ENCODE measurements at regions of chr19 and their contacts with region 1.

Region 1: GRCh38 chr19:17305517-17306284 is at the start of gene MRPL34:
- DNase-seq: peak; percentile 97
- ATAC-seq: peak; percentile 70
- H3K4me3 Mint-ChIP-seq: peak within 1 kb of the TSS; percentile 86
- H3K27ac Mint-ChIP-seq: peak within 1 kb of the TSS; percentile 92
- H3K4me1 Mint-ChIP-seq: peaks cover 46% of the 10 kb centered on the region
- H3K27me3 Mint-ChIP-seq: no peaks in the 10 kb centered on the region
- total RNA-seq, gene MRPL34: 72.0 to 88.6 TPM

Region 2: DNA sequence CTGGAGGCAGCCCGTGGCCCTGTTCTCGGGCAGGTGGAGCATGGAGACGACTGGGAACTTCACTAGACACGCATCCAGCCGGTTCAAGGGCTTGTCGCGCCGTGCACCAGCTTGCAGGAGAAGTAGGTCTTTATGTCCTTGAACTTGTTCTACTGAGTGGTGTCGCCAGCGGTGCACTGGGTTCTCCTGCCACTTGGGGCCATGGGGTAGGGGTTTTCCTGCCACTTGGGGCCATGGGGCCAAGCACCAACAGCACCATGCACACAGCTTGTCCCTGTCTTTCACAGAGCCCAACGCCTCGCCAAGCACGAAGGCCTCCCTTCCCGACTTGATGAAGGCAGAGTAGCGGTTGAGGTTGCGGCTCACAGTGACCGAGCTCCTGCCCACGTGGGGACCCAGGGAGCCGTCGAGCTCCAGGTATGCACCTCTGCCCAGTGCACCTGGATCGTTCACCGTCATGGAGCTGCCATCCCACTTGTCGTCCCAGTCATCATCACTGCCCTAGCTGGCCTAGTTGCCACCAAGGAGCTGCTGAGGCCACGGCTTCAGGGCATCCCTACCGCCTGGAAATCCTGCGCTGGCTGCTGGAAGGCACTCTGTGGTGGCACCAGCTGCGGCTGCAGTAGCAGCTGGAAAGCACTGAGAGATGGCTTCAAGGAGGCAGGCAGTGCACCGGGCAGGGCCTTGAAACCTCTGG is 1270.0 kb before region 1 on chr19:
- CTCF ChIA-PET with region 1: no interaction called
- POLR2A ChIA-PET with region 1: no interaction called
- intact Hi-C with region 1: no loop called
- DNase-seq: no peak
- ATAC-seq: no peak
- H3K4me3 Mint-ChIP-seq: no peak overlapping the region
- H3K27ac Mint-ChIP-seq: peak overlapping the region; percentile 25
- H3K4me1 Mint-ChIP-seq: no peaks in the 10 kb centered on the region
- H3K27me3 Mint-ChIP-seq: no peaks in the 10 kb centered on the region

Region 3: GRCh38 chr19:16542045-16542909 is 763.4 kb before region 1 on chr19 and contains the start of gene CHERP:
- CTCF ChIA-PET with region 1: no interaction called
- POLR2A ChIA-PET with region 1: no interaction called
- intact Hi-C with region 1: loop called in 1 of 2 experiments (anchors 5 kb)
- DNase-seq: peak; percentile 97
- ATAC-seq: peak; percentile 85
- H3K4me3 Mint-ChIP-seq: peak within 1 kb of the TSS; percentile 98
- H3K27ac Mint-ChIP-seq: peak within 1 kb of the TSS; percentile 94
- H3K4me1 Mint-ChIP-seq: peaks cover 63% of the 10 kb centered on the region
- H3K27me3 Mint-ChIP-seq: no peaks in the 10 kb centered on the region
- total RNA-seq, gene CHERP: 57.9 to 64.8 TPM

Region 4: DNA sequence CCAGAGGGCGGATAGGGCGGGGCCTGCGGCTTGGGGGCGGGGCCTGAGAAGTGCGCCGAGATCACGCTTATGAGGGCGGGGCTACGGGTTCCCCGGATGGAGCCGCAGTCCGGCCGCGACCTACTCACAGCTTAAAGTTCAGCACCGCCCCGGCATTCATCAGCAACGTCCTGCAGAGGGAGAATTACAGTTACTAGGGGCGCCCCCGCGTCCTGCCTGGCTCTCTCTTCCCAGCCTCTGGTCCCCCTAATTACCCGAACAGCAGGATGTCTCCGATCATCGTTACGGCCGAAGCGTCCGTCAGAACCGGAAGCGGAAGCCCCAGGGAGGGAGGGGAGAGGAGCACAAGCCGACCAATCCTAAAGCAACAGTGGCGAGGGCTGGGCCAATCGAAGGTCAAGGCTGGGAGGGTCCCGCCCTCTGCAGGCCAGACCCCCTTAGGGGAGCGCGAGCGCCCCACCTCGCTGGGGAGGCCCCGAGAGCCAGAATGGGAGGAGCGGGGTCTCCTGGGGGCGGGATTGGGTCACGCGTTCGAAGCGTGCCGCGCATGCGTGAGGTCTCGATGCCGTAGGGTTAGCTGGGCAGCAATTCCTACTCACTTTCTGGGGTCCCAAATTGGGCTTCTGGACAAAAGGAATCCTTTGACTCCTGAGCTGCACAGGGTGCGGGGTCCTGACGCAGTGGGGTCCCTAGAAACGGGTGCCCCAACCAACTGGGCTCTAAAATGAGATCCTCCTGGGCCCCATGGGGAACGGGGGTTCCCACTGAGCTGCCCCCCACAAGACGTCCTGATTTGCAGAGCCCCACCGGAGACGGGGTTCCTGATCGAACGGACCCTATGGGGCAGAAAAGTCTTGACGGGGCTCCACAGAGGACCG is 645.6 kb before region 1 on chr19 and contains the start of gene SMIM7:
- CTCF ChIA-PET with region 1: no interaction called
- POLR2A ChIA-PET with region 1: no interaction called
- intact Hi-C with region 1: loop called in 1 of 2 experiments (anchors 2 kb)
- DNase-seq: peak; percentile 99
- ATAC-seq: peak; percentile 99
- H3K4me3 Mint-ChIP-seq: peak within 1 kb of the TSS; percentile 99
- H3K27ac Mint-ChIP-seq: peak within 1 kb of the TSS; percentile 94
- H3K4me1 Mint-ChIP-seq: peaks cover 34% of the 10 kb centered on the region
- H3K27me3 Mint-ChIP-seq: peaks cover 4% of the 10 kb centered on the region
- total RNA-seq, gene SMIM7: 46.5 to 52.2 TPM

Region 5: GRCh38 chr19:17138937-17139598 is 166.6 kb before region 1 on chr19:
- CTCF ChIA-PET with region 1: no interaction called
- POLR2A ChIA-PET with region 1: no interaction called
- intact Hi-C with region 1: no loop called
- DNase-seq: no peak
- ATAC-seq: no peak
- H3K4me3 Mint-ChIP-seq: no peak overlapping the region
- H3K27ac Mint-ChIP-seq: no peak overlapping the region
- H3K4me1 Mint-ChIP-seq: peaks cover 9% of the 10 kb centered on the region
- H3K27me3 Mint-ChIP-seq: no peaks in the 10 kb centered on the region

Region 6: GRCh38 chr19:17226002-17226933 is 79.4 kb before region 1 on chr19 and contains the start of gene OCEL1:
- CTCF ChIA-PET with region 1: no interaction called
- POLR2A ChIA-PET with region 1: no interaction called
- intact Hi-C with region 1: loop called in 1 of 2 experiments (anchors 1 kb)
- DNase-seq: peak; percentile 99
- ATAC-seq: peak; percentile 92
- H3K4me3 Mint-ChIP-seq: peak within 1 kb of the TSS; percentile 80
- H3K27ac Mint-ChIP-seq: peak within 1 kb of the TSS; percentile 93
- H3K4me1 Mint-ChIP-seq: peaks cover 7% of the 10 kb centered on the region
- H3K27me3 Mint-ChIP-seq: no peaks in the 10 kb centered on the region
- total RNA-seq, gene OCEL1: 10.9 to 11.7 TPM

Region 7: DNA sequence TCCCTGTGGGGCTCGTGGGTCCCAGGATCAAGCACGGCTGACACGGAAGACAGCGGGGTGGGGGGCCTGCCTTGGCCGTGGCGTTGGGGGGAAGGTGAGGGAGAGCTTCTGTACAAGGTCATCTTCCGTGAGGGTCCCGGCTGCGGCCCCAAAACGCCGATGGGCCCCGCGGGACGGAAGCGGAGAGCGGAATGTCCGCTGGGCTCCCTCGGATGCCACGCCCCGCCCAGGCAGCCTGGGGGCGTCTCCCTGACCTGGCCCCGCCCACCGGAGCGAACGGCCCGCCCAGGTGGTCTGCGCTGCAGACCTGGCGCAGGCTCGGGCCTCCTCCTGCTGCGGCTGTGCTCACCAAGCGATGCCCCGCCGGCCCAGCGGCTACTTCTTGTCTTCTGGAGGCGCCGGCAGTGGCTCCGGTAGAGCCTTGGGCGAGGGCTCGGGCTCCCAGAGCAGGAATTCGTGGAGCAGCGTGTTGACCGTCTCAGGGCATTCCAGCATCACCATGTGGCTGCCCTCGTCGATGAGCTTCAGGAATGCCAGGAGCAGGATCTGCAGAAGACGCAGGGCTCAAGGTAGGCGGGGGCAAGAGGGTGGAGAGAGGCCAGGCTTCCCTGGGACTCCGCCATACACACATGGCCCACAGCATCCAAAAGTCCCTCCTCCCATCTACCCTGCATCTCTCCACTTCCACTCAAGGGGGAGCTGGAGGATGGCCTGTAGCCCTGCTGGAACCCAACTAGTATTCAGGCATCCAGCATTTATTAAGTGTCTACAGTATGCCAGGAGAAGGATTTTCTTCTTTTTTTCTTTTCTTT is 13.2 kb before region 1 on chr19:
- CTCF ChIA-PET with region 1: interaction called, 24 read pairs
- POLR2A ChIA-PET with region 1: interaction called, 5 read pairs
- intact Hi-C with region 1: loop called (anchors 1 kb)
- DNase-seq: peak; percentile 90
- ATAC-seq: peak; percentile 98
- H3K4me3 Mint-ChIP-seq: peak overlapping the region; percentile 88
- H3K27ac Mint-ChIP-seq: peak overlapping the region; percentile 84
- H3K4me1 Mint-ChIP-seq: peaks cover 5% of the 10 kb centered on the region
- H3K27me3 Mint-ChIP-seq: no peaks in the 10 kb centered on the region

Region 8: GRCh38 chr19:17336872-17337722 is 31.4 kb after region 1 on chr19 and contains the start of gene GTPBP3:
- CTCF ChIA-PET with region 1: interaction called, 5 read pairs
- POLR2A ChIA-PET with region 1: interaction called, 11 read pairs
- intact Hi-C with region 1: loop called (anchors 1 kb)
- DNase-seq: peak; percentile 98
- ATAC-seq: peak; percentile 89
- H3K4me3 Mint-ChIP-seq: peak within 1 kb of the TSS; percentile 98
- H3K27ac Mint-ChIP-seq: peak within 1 kb of the TSS; percentile 98
- H3K4me1 Mint-ChIP-seq: peaks cover 25% of the 10 kb centered on the region
- H3K27me3 Mint-ChIP-seq: no peaks in the 10 kb centered on the region
- total RNA-seq, gene GTPBP3: 37.3 to 39.8 TPM

Region 9: DNA sequence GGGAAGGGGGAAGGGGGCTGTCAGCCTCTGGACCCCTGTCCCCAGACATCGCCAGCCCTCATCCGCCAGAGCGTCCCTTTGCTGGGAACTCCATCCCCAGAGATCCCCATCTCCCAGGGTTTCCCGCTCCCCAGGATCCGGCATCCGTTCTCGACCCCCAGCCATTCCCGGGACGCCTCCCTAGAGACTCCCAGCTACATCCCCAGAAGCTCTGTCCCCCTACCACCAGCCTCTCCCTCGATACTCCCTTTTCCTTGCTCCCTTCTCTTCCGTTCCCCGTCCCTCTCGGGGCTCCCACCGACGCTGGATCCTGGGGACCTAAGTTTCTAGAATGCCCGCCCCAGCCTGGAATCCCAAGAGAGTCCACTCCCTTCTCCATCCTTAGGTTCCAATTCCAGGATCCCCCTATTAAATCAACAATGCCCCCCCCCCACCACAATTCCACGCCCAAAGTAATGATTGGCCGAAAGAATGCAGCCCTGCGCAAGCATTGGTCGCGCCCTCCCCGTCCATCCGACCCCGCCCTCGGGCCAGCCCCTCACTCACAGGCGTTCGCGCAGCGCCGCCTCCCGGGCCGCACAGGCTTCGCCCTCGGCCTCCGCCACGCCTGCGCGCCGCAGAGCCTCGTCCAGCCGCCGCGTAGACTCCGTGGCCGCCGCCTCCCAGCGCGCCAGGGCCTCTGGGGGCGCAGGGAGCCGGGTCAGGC is 85.1 kb after region 1 on chr19:
- CTCF ChIA-PET with region 1: interaction called, 13 read pairs
- POLR2A ChIA-PET with region 1: no interaction called
- intact Hi-C with region 1: loop called in 1 of 2 experiments (anchors 2 kb)
- DNase-seq: peak; percentile 97
- ATAC-seq: peak; percentile 98
- H3K4me3 Mint-ChIP-seq: peak overlapping the region; percentile 83
- H3K27ac Mint-ChIP-seq: peak overlapping the region; percentile 33
- H3K4me1 Mint-ChIP-seq: peaks cover 24% of the 10 kb centered on the region
- H3K27me3 Mint-ChIP-seq: peaks cover 4% of the 10 kb centered on the region

Measured in activated CD4-positive, alpha-beta T cell treated with anti-CD3 and anti-CD28 coated beads for 36 hours (primary cell).